Calu3 (cell line): ENCODE measurements at regions of chr20 and their contacts with region 1.

Region 1: DNA sequence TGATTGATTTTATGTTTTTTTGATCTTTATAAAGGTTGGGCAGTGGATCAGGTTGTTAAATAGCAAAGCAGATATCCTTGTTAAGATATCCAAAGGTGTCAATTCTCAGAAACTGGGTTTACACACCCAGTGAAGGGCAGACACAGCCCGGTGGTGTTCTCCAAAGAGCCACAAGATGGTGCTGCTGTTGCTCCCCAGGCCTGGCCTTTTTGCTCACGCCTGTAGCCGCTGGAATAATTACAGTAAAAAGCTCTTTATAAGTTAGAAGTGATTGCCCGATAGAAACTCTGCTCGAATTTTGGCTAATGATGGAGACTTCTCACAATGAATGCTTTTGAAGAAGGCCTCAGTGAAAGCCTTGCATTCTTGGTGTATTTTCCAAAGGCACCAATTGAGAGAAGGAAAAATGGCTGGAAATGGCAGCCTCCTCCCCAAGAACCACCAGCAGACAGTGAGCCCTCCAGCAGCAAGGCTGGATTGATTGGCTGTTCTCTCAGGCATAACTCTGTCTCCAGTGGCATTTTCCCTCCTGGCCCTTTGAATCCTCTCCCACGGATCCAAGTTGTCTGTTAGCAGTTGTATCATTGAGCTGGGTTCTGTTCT is 120.5 kb upstream of the CHD6 start:
- DNase-seq: peak; percentile 81
- H3K4me3 Mint-ChIP-seq: no peak overlapping the region
- H3K27ac Mint-ChIP-seq: no peak overlapping the region
- H3K4me1 Mint-ChIP-seq: no peaks in the 10 kb centered on the region
- H3K27me3 Mint-ChIP-seq: peaks cover 21% of the 10 kb centered on the region
- CTCF ChIP-seq: peak; percentile 95

Region 2: GRCh38 chr20:41693136-41693979 is 45.3 kb before region 1 on chr20:
- CTCF ChIA-PET with region 1: interaction called, 7 read pairs
- intact Hi-C with region 1: loop called (anchors 1 kb)
- DNase-seq: peak; percentile 84
- H3K4me3 Mint-ChIP-seq: peak overlapping the region; percentile 84
- H3K27ac Mint-ChIP-seq: peak overlapping the region; percentile 69
- H3K4me1 Mint-ChIP-seq: peaks cover 18% of the 10 kb centered on the region
- H3K27me3 Mint-ChIP-seq: peaks cover 13% of the 10 kb centered on the region
- CTCF ChIP-seq: peak; percentile 61

Region 3: DNA sequence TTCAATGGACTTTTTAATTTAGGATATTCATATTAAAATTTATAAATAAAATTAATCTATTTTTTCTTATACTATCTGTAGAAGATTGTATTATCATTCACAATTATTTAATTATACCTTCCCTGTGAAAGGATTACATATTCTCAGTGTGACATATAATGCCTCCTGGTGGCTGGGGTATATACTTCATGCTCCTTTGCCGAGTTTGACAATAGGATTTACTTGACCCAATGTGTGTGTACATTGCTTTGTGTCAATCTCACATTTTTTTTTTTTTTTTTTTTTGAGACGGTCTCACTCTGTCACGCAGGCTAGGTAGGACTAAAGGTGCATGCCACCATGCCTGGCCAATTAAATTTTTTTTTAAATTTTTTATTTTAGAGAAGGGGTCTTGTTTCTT is 109.5 kb after region 1 on chr20:
- CTCF ChIA-PET with region 1: interaction called, 3 read pairs
- intact Hi-C with region 1: loop called (anchors 1 kb)
- DNase-seq: no peak
- H3K4me3 Mint-ChIP-seq: no peak overlapping the region
- H3K27ac Mint-ChIP-seq: no peak overlapping the region
- H3K4me1 Mint-ChIP-seq: no peaks in the 10 kb centered on the region
- H3K27me3 Mint-ChIP-seq: no peaks in the 10 kb centered on the region
- CTCF ChIP-seq: no peak

Region 4: DNA sequence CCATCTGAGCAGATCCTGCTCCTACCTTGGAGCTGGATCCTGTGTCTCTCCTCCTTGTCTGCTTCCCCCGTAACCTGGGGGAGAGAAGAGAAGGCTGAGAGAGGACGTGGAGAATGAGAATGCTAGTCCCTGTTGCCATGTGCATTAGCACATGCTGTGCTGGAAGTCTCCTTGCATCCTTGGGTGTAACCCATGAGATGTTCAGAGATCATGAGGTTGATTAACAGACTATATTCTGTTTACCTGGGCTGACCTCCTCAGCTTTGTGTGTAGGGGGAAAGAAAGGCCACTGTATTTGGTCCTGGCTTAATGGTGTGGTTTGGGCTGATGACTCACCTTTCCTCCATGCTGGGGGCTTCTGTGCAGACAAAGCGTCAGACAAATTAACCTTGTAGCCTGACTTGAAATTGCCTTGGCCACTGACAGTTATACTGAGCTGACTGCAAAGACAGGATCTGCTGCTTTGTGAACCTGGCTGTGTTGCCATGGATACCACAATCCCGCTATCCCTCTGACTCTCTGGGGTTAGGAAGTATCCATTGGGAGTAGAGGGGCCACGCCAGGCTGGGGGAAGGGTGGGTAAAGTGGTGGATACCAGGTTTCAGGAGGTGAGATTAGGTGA is 123.2 kb after region 1 on chr20:
- CTCF ChIA-PET with region 1: no interaction called
- intact Hi-C with region 1: no loop called
- DNase-seq: no peak
- H3K4me3 Mint-ChIP-seq: no peak overlapping the region
- H3K27ac Mint-ChIP-seq: no peak overlapping the region
- H3K4me1 Mint-ChIP-seq: no peaks in the 10 kb centered on the region
- H3K27me3 Mint-ChIP-seq: no peaks in the 10 kb centered on the region
- CTCF ChIP-seq: no peak

Region 5: DNA sequence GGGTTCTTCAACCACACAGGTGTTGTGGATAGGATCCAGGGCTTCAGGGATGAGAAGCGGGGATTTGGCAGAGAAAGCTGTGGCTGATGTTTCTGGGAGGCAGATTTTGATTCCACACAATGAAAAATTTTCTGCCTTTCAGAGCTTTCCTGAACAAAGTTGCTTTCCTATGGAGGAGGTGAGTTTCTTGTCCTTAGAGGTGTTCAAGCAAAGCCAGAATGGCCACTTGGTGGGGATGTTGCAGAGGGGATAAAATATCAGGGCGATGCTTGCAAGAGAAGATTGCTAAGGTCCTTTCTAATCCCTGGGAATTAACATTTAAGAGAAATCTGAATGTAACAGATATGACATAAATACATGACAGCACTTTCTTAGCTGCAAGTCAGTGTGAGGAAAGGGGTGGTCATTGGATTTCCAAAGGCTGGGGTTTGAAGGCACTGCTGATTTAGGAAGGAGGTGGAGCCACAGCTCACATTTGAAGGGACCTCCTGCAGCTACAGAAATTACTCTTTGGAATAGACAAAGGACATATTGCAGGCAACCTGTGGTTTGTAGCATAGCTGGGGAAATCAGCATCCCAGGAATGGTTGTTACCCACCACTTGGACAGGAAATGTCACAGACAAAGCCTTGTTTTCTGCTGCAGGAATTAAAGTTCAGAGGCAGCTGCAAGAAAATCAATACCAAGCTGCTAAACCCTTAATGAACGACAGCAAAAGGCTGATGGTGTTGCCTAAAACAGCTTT is 150.6 kb after region 1 on chr20:
- CTCF ChIA-PET with region 1: interaction called, 10 read pairs
- intact Hi-C with region 1: loop called (anchors 1 kb)
- DNase-seq: peak; percentile 50
- H3K4me3 Mint-ChIP-seq: no peak overlapping the region
- H3K27ac Mint-ChIP-seq: no peak overlapping the region
- H3K4me1 Mint-ChIP-seq: peaks cover 20% of the 10 kb centered on the region
- H3K27me3 Mint-ChIP-seq: no peaks in the 10 kb centered on the region
- CTCF ChIP-seq: peak; percentile 13

Region 6: DNA sequence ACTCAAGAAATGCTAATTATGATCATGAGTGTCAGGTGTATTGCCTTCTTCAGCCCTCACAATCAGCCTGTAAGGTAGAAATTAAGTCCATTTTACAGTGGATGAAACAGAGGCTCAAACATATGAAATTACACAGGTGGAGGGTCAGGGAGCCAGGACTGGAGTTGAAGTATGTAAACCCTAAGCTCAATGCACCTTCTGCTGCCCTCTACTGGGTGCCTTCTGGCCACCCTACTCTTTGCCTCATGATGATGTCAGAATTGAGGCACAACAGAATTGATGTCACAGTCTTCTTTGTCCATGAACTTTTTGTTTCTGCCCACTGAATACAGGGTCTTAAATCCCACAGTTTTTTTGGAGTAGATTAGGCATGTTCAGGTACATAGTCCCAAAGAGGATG is 280.2 kb after region 1 on chr20:
- CTCF ChIA-PET with region 1: interaction called, 20 read pairs
- intact Hi-C with region 1: loop called (anchors 1 kb)
- DNase-seq: peak; percentile 45
- H3K4me3 Mint-ChIP-seq: no peak overlapping the region
- H3K27ac Mint-ChIP-seq: no peak overlapping the region
- H3K4me1 Mint-ChIP-seq: no peaks in the 10 kb centered on the region
- H3K27me3 Mint-ChIP-seq: no peaks in the 10 kb centered on the region
- CTCF ChIP-seq: no peak

Region 7: DNA sequence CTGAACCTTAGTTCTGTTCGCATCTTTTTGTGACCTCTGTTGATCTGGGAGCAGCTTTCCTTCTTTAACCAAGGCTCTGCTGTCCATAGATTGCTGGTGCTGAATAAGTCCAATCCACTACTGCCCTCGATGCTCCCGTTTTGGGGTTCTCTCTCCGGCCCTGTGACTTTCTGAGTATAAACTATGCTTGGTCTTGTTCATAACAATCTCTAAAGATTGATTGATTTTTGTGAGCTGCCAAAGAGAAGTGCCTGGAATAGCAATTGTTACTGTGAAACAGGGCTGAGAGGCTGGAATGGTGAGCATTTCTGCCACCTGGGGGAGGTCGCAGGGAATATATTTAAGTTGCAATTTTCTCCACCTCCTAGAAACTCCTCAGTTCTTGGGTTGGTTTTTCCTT is 302.4 kb after region 1 on chr20:
- CTCF ChIA-PET with region 1: no interaction called
- intact Hi-C with region 1: no loop called
- DNase-seq: no peak
- H3K4me3 Mint-ChIP-seq: no peak overlapping the region
- H3K27ac Mint-ChIP-seq: no peak overlapping the region
- H3K4me1 Mint-ChIP-seq: no peaks in the 10 kb centered on the region
- H3K27me3 Mint-ChIP-seq: peaks cover 28% of the 10 kb centered on the region
- CTCF ChIP-seq: no peak

Region 8: DNA sequence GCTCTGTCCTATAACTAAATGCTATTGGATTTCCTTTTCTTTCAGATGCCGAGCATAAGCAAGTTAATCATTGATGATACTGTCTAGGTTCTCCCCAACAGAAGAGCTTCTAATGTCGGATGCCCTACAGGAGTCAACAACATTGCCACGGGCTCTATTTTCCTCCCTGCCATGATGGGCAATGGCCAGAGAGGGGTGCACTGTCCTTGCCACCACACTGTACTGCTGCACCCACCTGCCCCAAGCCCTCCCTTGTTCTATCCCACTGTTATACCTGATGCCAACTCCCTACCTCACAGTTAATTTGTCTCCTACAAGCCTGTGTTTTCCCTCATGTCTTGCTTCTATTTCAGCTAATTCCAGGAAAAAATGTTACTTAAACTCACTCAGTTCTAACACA is 653.1 kb after region 1 on chr20:
- CTCF ChIA-PET with region 1: no interaction called
- intact Hi-C with region 1: no loop called
- DNase-seq: no peak
- H3K4me3 Mint-ChIP-seq: no peak overlapping the region
- H3K27ac Mint-ChIP-seq: no peak overlapping the region
- H3K4me1 Mint-ChIP-seq: no peaks in the 10 kb centered on the region
- H3K27me3 Mint-ChIP-seq: no peaks in the 10 kb centered on the region
- CTCF ChIP-seq: no peak

Region 9: DNA sequence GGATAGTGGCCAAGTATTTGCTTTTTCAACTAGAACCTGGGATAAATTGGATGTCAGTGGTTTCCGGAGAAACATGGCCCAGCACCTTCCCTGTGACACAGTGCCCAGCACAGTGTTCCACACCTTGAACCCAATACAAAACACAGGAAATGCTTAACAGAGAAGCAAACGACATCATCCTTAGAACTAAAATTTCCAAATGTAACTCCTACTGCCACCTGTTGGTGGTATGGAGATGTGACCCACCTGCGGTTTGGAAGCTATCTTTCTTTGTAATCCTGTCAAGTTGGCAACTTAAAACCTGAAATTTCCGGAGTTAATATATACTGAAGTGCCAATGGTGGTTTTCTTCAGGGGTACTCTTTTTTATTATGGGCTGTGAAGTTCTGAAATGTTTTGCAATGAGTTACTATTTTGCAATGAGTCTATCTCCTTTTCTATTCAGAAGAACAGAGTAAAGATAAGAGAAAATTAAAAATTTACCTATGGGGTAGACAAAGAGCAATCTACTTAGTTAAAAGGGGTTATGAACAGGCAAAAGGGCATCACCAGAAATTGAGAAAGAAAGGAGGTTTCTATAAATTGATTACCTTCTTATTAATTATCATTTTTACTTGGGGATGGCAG is 792.2 kb after region 1 on chr20:
- CTCF ChIA-PET with region 1: no interaction called
- intact Hi-C with region 1: loop called (anchors 10 kb)
- DNase-seq: peak; percentile 34
- H3K4me3 Mint-ChIP-seq: no peak overlapping the region
- H3K27ac Mint-ChIP-seq: no peak overlapping the region
- H3K4me1 Mint-ChIP-seq: no peaks in the 10 kb centered on the region
- H3K27me3 Mint-ChIP-seq: peaks cover 18% of the 10 kb centered on the region
- CTCF ChIP-seq: peak; percentile 81

Region 10: DNA sequence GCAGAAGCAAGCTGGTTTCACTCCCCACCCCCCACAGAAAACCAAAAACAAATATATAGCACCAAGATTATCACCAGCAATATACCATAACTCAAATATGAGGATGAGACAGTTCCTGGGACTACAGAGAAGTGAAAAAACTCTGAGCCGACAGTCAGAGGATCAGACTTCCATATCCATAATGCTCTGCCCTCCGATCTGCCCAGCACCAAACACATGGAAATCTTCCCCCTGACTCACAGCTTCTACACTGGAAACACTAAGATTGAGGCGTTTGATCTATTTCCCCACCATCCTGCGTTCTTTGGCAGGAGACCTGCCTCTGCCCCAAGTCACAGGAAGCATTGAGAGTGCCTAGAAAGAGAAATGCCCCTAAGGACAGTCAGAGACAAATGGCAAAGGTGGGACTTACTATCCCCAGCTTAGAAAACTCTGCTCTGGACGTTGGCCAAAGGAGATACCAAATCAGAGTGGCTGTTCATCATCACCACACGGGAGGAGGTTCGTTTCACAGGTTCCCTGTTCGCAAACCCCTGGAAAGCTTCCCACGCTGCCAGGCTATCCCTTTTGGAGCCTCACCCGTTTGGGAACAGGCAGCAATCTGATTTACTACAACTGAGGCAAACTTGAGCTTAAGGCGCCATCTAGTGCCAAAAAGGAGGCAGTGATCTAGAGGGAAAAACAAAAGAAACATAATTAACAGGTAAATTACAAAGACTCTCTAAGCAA is 1670.3 kb after region 1 on chr20:
- CTCF ChIA-PET with region 1: interaction called, 11 read pairs
- intact Hi-C with region 1: loop called (anchors 1 kb)
- DNase-seq: peak; percentile 40
- H3K4me3 Mint-ChIP-seq: no peak overlapping the region
- H3K27ac Mint-ChIP-seq: no peak overlapping the region
- H3K4me1 Mint-ChIP-seq: no peaks in the 10 kb centered on the region
- H3K27me3 Mint-ChIP-seq: peaks cover 78% of the 10 kb centered on the region
- CTCF ChIP-seq: peak; percentile 79